ENCODE measurements at regions of chr6 and their contacts with region 1.

Region 1: DNA sequence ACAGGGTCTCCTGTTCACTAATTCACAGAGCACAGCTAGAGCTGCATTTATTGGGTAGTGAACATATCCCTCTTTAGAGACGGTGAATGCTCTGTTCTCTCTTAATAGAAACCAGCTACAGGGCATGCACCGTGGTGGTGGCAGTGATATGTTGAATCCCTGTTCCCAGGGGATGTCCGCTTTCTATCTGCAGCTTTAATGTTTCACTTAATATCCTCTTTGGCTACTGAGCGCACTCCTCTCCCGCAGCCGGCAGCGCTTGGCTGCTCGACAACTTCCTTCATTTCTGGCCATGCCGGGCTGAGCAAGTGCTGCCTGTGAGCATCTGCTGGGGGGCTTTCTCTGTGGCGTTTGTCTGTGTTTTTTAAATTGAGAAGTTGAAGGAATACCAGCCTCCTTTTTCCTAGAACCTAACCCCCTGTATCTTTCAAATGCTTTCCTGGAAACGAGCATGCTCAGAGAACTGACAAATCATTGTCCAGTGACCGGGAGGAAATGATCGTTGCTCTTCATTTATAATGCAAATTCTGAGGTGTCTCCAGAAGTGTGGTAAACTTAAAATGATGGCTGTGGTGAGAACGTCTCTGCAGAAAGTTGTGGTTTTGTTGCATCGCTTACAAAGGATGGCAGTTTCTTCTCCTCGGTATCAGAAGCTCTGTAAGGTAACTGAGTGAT is 297.9 kb downstream of the UTRN start:
- DNase-seq: peak in 8 of 9 donors; percentile 43 to 77 (median 68)
- ATAC-seq: peak; percentile 86
- H3K4me3 ChIP-seq: peak overlapping the region; percentile 33
- H3K4me3 Mint-ChIP-seq: peak overlapping the region; percentile 70 to 91 (median 86)
- H3K27ac ChIP-seq: peak overlapping the region; percentile 41
- H3K27ac Mint-ChIP-seq: peak overlapping the region; percentile 5 to 93 (median 82)
- H3K4me1 ChIP-seq: peaks cover 19 to 20% of the 10 kb centered on the region in 2 donors
- H3K4me1 Mint-ChIP-seq: peaks cover 14 to 62% (median 32%) of the 10 kb centered on the region in 7 donors
- H3K27me3 ChIP-seq: no peaks in the 10 kb centered on the region
- H3K27me3 Mint-ChIP-seq: no peaks in the 10 kb centered on the region

Region 2: DNA sequence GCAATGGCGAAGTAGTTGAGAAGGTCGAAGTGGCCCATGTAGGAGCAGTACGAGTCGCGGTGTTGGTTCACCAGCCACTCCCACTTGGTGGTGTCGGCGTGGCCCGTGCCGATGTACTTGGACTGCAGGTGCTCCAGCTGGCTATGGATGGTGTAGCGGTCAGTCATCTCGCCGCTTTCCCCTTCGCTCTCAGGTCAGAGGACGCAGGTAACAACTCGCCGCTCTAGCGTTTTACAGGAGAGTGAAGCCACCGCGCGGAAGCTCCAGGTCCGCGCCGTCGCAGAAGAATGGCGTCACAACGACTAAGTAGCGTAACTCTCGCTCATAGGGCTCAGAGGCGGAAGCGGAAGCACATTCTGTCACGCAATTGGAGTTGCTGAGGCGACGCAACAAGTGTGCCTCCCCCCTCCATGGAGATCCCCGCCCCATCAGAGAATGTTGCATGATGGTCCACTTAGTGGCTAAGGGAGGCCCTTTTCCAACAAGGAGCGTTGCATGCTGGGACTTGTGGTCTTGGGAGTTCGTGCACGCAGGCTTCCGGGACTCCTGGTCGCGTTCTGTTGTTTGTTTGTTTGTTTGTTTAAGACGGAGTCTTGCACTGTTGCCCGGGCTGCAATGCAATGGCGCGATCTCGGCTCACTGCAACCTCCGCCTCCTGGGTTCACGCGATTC is 487.6 kb before region 1 on chr6 and contains the start of gene SF3B5:
- CTCF ChIA-PET with region 1: no interaction called
- POLR2A ChIA-PET with region 1: no interaction called
- intact Hi-C with region 1: loop called in 1 of 2 experiments (anchors 1 kb)
- DNase-seq: peak; percentile 86 to 99 (median 97)
- ATAC-seq: peak; percentile 98
- H3K4me3 ChIP-seq: peak within 1 kb of the TSS; percentile 98
- H3K4me3 Mint-ChIP-seq: peak within 1 kb of the TSS; percentile 93 to 100 (median 98)
- H3K27ac ChIP-seq: peak within 1 kb of the TSS; percentile 92
- H3K27ac Mint-ChIP-seq: peak within 1 kb of the TSS; percentile 96 to 100 (median 98)
- H3K4me1 ChIP-seq: peaks cover 13 to 14% of the 10 kb centered on the region in 2 donors
- H3K4me1 Mint-ChIP-seq: peaks cover 15 to 38% (median 32%) of the 10 kb centered on the region in 7 donors
- H3K27me3 ChIP-seq: no peaks in the 10 kb centered on the region
- H3K27me3 Mint-ChIP-seq: peaks cover 0 to 10% (median 0%) of the 10 kb centered on the region in 5 donors
- total RNA-seq, gene SF3B5: 89.2 to 155 (median 122) TPM

Region 3: DNA sequence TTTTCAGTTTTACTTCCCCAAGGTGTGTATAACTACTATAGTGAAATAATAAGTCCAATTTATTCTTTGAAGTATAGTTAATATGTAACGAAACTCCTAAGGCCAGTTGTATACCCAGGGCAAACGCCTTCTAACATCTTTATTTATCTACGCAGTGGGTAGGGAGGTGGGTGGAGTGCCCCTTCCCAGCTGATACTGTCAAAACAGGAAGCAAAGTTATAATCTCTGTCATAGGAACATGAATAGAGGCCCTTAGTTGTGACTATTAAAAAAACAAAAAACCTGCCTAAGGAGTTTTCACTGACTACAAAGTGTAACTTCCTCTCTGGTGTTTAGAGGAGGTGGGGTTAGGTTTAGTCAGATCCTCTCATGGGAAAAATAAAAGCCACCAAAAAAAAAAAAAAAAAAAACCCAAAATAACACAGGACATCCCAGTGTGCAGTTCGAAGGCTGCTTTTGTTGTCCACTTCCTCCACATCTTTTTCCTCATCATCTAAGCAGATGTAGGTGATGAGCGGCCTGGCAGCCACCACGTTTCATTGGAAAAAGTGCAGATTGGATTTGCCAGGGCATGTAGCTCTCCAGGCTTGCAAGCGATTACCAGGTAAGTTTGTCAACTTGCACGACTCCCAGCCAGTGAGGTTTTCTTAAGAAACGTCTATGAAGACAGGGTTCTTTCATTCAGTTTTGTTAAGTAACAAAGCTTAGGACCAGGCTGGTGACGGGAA is 239.2 kb before region 1 on chr6:
- CTCF ChIA-PET with region 1: no interaction called
- POLR2A ChIA-PET with region 1: no interaction called
- intact Hi-C with region 1: loop called in 1 of 2 experiments (anchors 2 kb)
- DNase-seq: peak in 8 of 9 donors; percentile 37 to 85 (median 76)
- ATAC-seq: peak; percentile 88
- H3K4me3 ChIP-seq: peak overlapping the region; percentile 67
- H3K4me3 Mint-ChIP-seq: peak overlapping the region; percentile 80 to 99 (median 94)
- H3K27ac ChIP-seq: peak overlapping the region; percentile 75
- H3K27ac Mint-ChIP-seq: peak overlapping the region; percentile 87 to 99 (median 96)
- H3K4me1 ChIP-seq: peaks cover 58 to 62% of the 10 kb centered on the region in 2 donors
- H3K4me1 Mint-ChIP-seq: peaks cover 68 to 93% (median 84%) of the 10 kb centered on the region in 7 donors
- H3K27me3 ChIP-seq: no peaks in the 10 kb centered on the region
- H3K27me3 Mint-ChIP-seq: no peaks in the 10 kb centered on the region

Region 4: GRCh38 chr6:144528743-144529425 is 54.2 kb before region 1 on chr6:
- CTCF ChIA-PET with region 1: no interaction called
- POLR2A ChIA-PET with region 1: no interaction called
- intact Hi-C with region 1: no loop called
- DNase-seq: no peak
- ATAC-seq: no peak
- H3K4me3 ChIP-seq: no peak overlapping the region
- H3K4me3 Mint-ChIP-seq: no peak overlapping the region
- H3K27ac ChIP-seq: no peak overlapping the region
- H3K27ac Mint-ChIP-seq: peak overlapping the region in 2 of 9 donors; percentile 58
- H3K4me1 ChIP-seq: no peaks in the 10 kb centered on the region
- H3K4me1 Mint-ChIP-seq: peaks cover 0 to 13% (median 6%) of the 10 kb centered on the region in 7 donors
- H3K27me3 ChIP-seq: no peaks in the 10 kb centered on the region
- H3K27me3 Mint-ChIP-seq: no peaks in the 10 kb centered on the region

Region 5: DNA sequence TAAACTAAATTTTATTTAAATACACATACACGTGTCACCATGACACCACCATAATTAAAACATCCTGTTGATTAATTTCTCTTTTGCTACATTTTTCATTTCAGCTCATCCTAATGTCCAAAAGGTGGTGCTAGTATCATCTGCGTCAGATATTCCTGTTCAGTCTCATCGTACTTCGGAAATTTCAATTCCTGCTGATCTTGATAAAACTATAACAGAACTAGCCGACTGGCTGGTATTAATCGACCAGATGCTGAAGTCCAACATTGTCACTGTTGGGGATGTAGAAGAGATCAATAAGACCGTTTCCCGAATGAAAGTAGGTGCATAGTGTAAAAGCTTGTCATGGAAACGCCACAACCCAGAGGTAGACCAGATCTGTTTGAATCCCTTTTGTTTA is 34.5 kb before region 1 on chr6:
- CTCF ChIA-PET with region 1: no interaction called
- POLR2A ChIA-PET with region 1: no interaction called
- intact Hi-C with region 1: no loop called
- DNase-seq: no peak
- ATAC-seq: no peak
- H3K4me3 ChIP-seq: no peak overlapping the region
- H3K4me3 Mint-ChIP-seq: no peak overlapping the region
- H3K27ac ChIP-seq: no peak overlapping the region
- H3K27ac Mint-ChIP-seq: no peak overlapping the region
- H3K4me1 ChIP-seq: no peaks in the 10 kb centered on the region
- H3K4me1 Mint-ChIP-seq: peaks cover 0 to 11% (median 0%) of the 10 kb centered on the region in 7 donors
- H3K27me3 ChIP-seq: no peaks in the 10 kb centered on the region
- H3K27me3 Mint-ChIP-seq: no peaks in the 10 kb centered on the region

Region 6: DNA sequence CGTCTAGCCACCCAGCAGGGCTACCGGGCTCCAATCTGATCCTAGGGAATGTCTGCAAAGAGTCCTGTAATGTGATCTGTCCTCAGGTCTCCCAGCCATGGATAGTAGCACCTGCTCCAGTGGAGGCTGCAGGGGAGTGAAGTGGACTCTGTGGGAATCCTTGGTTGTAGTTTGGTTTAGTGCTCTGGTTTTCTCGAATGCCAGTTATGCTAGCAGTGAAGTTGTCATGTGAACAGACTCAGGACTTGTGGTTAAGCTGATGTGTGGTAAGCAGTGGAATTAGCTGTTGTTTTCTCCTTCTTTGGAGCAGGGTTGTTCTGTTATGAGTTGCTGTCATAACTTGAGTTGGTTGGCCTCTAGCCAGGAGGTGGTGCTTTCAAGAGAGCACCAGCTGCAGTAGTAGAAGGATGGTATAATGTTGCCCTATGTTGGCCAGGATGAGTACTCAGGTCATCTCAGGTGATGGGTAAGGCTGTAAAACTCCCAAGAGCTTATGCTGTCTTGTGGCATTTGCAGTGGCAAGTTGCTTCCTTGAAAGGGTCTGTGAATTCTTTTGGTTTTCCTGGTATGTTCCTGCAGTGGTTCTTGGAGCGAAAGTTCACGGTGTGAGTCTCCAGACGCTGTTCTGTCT is 92.3 kb after region 1 on chr6:
- CTCF ChIA-PET with region 1: no interaction called
- POLR2A ChIA-PET with region 1: no interaction called
- intact Hi-C with region 1: loop called in 1 of 2 experiments (anchors 5 kb)
- DNase-seq: no peak
- ATAC-seq: peak; percentile 46
- H3K4me3 ChIP-seq: no peak overlapping the region
- H3K4me3 Mint-ChIP-seq: peak overlapping the region in 2 of 10 donors; percentile 32 to 60
- H3K27ac ChIP-seq: no peak overlapping the region
- H3K27ac Mint-ChIP-seq: peak overlapping the region in 5 of 9 donors; percentile 13 to 82 (median 63)
- H3K4me1 ChIP-seq: no peaks in the 10 kb centered on the region
- H3K4me1 Mint-ChIP-seq: peaks cover 19 to 51% (median 35%) of the 10 kb centered on the region in 7 donors
- H3K27me3 ChIP-seq: no peaks in the 10 kb centered on the region
- H3K27me3 Mint-ChIP-seq: no peaks in the 10 kb centered on the region

Region 7: DNA sequence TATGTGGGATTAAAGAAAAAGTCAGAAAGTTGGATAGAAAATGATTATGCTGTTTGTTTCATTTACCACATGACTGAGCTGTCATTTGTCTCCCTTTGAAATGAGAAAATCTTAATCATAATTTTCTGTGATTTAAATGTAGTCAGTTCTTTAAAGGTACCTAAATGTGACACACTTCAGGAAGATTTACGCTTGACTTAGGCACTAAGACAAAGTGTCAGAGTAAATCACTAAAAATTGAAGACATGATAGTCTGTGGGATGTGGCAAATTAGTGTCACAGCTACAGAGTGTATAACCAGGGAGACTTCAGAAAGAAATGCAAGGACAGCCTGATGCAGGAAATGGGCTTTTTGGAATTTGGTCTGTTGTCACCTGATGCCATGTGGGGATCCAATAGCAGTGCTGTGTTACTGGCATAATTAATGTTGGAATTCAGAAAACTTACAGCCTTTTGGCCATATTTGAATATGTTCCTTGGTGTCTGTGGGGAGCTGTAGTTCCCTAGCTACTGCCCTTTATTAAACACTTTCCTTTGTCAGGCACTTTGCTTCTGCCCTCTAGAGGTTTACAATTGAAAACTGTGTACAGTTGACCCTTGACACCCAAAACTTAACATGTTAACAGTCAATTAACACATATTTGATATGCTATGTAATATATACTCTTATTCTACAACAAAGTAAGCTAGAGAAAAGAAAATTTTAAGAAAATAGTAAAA is 195.9 kb after region 1 on chr6:
- CTCF ChIA-PET with region 1: no interaction called
- POLR2A ChIA-PET with region 1: no interaction called
- intact Hi-C with region 1: loop called (anchors 5 kb)
- DNase-seq: no peak
- ATAC-seq: no peak
- H3K4me3 ChIP-seq: no peak overlapping the region
- H3K4me3 Mint-ChIP-seq: no peak overlapping the region
- H3K27ac ChIP-seq: no peak overlapping the region
- H3K27ac Mint-ChIP-seq: no peak overlapping the region
- H3K4me1 ChIP-seq: no peaks in the 10 kb centered on the region
- H3K4me1 Mint-ChIP-seq: peaks cover 0 to 17% (median 4%) of the 10 kb centered on the region in 7 donors
- H3K27me3 ChIP-seq: no peaks in the 10 kb centered on the region
- H3K27me3 Mint-ChIP-seq: no peaks in the 10 kb centered on the region

Region 8: GRCh38 chr6:145028144-145028818 is 445.2 kb after region 1 on chr6:
- CTCF ChIA-PET with region 1: interaction called, 3 read pairs
- POLR2A ChIA-PET with region 1: no interaction called
- intact Hi-C with region 1: loop called (anchors 1 kb)
- DNase-seq: peak in 2 of 9 donors; percentile 2 to 5
- ATAC-seq: peak; percentile 41
- H3K4me3 ChIP-seq: no peak overlapping the region
- H3K4me3 Mint-ChIP-seq: no peak overlapping the region
- H3K27ac ChIP-seq: no peak overlapping the region
- H3K27ac Mint-ChIP-seq: no peak overlapping the region
- H3K4me1 ChIP-seq: no peaks in the 10 kb centered on the region
- H3K4me1 Mint-ChIP-seq: no peaks in the 10 kb centered on the region
- H3K27me3 ChIP-seq: no peaks in the 10 kb centered on the region
- H3K27me3 Mint-ChIP-seq: peaks cover 18 to 41% (median 30%) of the 10 kb centered on the region in 5 donors

Region 9: DNA sequence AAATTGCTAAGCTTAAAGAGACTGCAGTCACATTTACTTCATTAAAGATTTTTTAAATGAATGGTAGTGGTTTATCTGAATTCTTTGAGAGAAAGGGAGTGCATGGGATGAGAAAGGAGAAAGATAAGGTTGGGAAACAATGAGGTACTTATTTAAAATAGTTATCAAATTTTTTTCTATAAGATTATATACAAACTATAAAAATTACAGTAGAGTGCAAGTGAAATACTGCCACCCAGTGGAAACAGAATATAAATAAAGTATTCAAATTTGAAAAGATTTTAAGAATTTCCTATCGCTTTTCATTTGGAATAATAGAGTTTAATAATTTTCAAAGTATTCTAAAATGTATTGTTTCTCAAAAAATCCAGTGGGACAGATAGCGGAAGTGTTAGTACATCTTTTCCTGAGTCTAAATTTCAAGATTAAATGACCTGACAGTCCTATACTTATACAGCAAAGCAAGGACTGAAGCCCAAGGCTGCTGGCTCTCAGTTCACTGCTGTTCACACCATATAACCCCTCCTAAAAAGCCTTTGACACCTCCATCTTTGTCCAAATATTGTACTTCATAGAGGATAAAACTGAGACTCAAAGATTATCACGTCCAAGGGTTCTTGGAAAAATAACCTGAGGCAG is 1121.2 kb after region 1 on chr6:
- CTCF ChIA-PET with region 1: no interaction called
- POLR2A ChIA-PET with region 1: no interaction called
- intact Hi-C with region 1: loop called in 1 of 2 experiments (anchors 10 kb)
- DNase-seq: peak in 3 of 9 donors; percentile 2 to 16 (median 6)
- ATAC-seq: no peak
- H3K4me3 ChIP-seq: no peak overlapping the region
- H3K4me3 Mint-ChIP-seq: no peak overlapping the region
- H3K27ac ChIP-seq: no peak overlapping the region
- H3K27ac Mint-ChIP-seq: no peak overlapping the region
- H3K4me1 ChIP-seq: no peaks in the 10 kb centered on the region
- H3K4me1 Mint-ChIP-seq: peaks cover 5 to 14% (median 6%) of the 10 kb centered on the region in 7 donors
- H3K27me3 ChIP-seq: no peaks in the 10 kb centered on the region
- H3K27me3 Mint-ChIP-seq: no peaks in the 10 kb centered on the region

Measured in naive thymus-derived CD4-positive, alpha-beta T cell (primary cell).